ENCODE measurements at regions of chr14 and their contacts with region 1.

Region 1: GRCh38 chr14:50823051-50823761 is 7.8 kb downstream of the NIN start:
- DNase-seq: no peak
- H3K4me3 ChIP-seq: no peak overlapping the region
- H3K27ac ChIP-seq: no peak overlapping the region
- H3K4me1 ChIP-seq: peaks cover 0 to 17% (median 2%) of the 10 kb centered on the region in 4 donors
- H3K27me3 ChIP-seq: no peaks in the 10 kb centered on the region
- CTCF ChIP-seq: no peak

Region 2: DNA sequence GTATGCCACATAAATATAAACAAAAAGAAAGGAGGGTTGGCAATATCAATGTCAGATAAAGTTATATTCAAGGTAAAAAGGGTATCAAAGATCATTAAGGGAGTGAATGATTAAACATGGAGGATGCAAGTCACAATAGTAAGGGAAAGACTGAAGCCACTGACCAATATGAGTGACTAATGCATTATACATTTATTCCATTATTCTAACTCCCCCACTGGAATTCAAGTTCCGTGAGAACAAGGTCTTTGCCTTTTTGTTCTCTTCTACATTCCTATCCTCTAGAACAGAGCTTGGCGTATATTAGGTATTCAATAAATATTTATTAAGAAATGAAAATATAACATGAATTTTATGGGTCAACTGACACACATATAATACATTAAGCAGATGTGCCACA is 321.6 kb before region 1 on chr14:
- intact Hi-C with region 1: loop called (anchors 5 kb)
- DNase-seq: no peak
- H3K4me3 ChIP-seq: no peak overlapping the region
- H3K27ac ChIP-seq: no peak overlapping the region
- H3K4me1 ChIP-seq: peaks cover 0 to 20% (median 2%) of the 10 kb centered on the region in 4 donors
- H3K27me3 ChIP-seq: no peaks in the 10 kb centered on the region
- CTCF ChIP-seq: no peak

Region 3: GRCh38 chr14:50943943-50944646 is 120.9 kb after region 1 on chr14 and contains the start of gene PYGL:
- intact Hi-C with region 1: no loop called
- DNase-seq: peak; percentile 76 to 87
- H3K4me3 ChIP-seq: peak within 1 kb of the TSS; percentile 68 to 77
- H3K27ac ChIP-seq: peak within 1 kb of the TSS; percentile 84 to 88
- H3K4me1 ChIP-seq: peaks cover 0 to 10% (median 9%) of the 10 kb centered on the region in 4 donors
- H3K27me3 ChIP-seq: no peaks in the 10 kb centered on the region
- CTCF ChIP-seq: no peak

Region 4: GRCh38 chr14:51189600-51190375 is 366.6 kb after region 1 on chr14:
- intact Hi-C with region 1: no loop called
- DNase-seq: no peak
- H3K4me3 ChIP-seq: no peak overlapping the region
- H3K27ac ChIP-seq: no peak overlapping the region
- H3K4me1 ChIP-seq: peaks cover 0 to 11% (median 4%) of the 10 kb centered on the region in 4 donors
- H3K27me3 ChIP-seq: no peaks in the 10 kb centered on the region
- CTCF ChIP-seq: no peak

Measured in tibial artery (tissue), 4 donors.